Mucosa of descending colon (tissue), 3 donors: ENCODE measurements at regions of chr11 and their contacts with region 1.

Region 1: DNA sequence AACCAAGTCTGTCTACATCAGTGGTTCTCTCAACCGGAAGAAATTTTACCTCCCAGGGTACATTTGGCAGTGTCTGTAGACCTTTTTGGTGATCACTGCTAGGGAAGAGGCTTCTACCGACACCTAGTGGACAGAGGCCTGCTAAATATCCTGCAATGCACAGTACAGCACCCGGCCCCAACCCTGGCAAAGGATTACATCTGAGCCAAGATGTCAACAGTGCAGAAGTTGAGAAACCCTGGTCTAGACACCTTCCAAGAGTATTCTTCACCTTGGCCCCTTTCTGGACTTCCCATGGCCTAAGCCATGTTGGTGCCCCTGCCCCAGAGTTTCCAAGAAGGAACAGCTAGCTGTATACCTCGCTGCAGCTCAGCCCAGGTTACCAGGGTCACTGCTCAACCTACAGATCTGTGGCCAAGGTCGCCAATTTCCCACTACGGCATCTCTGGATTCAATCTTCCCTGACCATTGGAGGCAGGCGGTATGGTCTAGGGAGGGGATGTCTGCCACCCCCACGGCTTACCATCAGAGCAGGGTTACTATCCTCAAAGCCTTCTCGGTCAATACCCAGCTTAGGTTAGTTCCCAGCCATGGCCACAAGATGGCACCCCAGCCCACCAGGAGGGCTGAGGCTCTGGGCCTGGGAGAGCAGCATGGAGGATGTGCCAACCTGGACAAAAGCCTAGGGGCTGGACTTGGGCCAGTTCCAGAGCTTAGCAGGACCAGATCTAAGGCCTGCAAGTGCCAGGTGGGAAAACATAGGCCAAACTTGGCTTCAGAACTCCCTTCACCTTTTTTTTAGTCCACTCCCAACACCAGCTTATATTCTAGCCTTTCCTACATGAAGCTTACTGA is 3.7 kb upstream of the KCNC1 start:
- DNase-seq: peak in 2 of 3 donors; percentile 74 to 84
- ATAC-seq: peak; percentile 88
- H3K4me3 ChIP-seq: no peak overlapping the region
- H3K4me1 ChIP-seq: peaks cover 8% of the 10 kb centered on the region
- CTCF ChIP-seq: peak; percentile 63

Region 2: GRCh38 chr11:17978553-17979287 is 247.9 kb after region 1 on chr11:
- intact Hi-C with region 1: loop called (anchors 2 to 5 kb)
- DNase-seq: peak in 2 of 3 donors; percentile 65 to 67
- ATAC-seq: peak; percentile 84
- H3K4me3 ChIP-seq: no peak overlapping the region
- H3K4me1 ChIP-seq: no peaks in the 10 kb centered on the region
- CTCF ChIP-seq: peak; percentile 44